IMR-90 (cell line): ENCODE measurements at regions of chr4 and their contacts with region 1.

Region 1: GRCh38 chr4:105471566-105472176 is 2.2 kb downstream of the PPA2 start:
- DNase-seq: peak; percentile 79
- ATAC-seq: peak; percentile 24
- H3K4me3 ChIP-seq: no peak overlapping the region
- H3K27ac ChIP-seq: no peak overlapping the region
- H3K4me1 ChIP-seq: peaks cover 3% of the 10 kb centered on the region; the same call in 1 of the 2 replicates
- H3K27me3 ChIP-seq: no peaks in the 10 kb centered on the region
- CTCF ChIP-seq: peak; percentile 80
- POLR2A ChIP-seq: no peak
- RAD21 ChIP-seq: peak; percentile 89

Region 2: DNA sequence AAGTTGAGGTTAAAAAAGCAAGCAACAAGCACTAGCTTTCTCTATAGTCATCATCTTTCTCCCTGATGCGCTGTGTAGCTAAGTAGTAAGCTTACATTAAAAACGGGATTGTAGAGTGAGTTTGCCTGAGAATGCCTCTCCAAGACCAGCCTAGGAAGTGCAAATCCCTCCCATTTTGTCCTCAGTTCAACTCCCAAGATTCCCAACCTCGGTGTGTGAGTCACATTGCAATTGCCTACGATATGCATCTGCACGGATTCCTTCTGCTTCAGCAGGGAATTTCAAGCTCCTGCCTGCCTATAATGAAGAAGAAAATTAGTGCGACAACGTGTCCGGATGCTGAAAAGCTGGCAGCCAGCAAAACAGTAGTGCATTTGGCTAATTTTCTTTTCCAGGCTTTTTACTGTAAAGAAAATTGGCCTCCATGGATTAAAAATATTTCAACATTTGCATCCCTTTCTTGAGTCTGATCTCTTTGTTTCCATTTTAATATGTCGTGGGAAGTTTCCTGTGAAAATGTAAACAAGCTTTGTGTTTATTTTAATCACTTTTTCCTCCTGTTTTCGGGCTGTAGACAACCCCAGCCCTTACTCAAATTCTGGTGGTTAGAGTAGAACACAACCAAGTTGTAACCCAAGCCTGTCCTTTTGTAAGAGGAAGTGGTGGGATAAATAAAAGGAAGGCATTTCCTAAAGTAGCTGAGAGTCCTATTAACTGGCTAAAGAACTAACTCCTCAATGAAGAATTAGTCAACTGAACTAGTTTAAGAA is 383.4 kb before region 1 on chr4:
- CTCF ChIA-PET with region 1: interaction called, 3 read pairs
- POLR2A ChIA-PET with region 1: interaction called, 4 read pairs
- dilution Hi-C with region 1: no loop called
- in situ Hi-C with region 1: no loop called
- intact Hi-C with region 1: loop called (anchors 1 kb)
- DNase-seq: peak; percentile 98
- ATAC-seq: peak; percentile 94
- H3K4me3 ChIP-seq: peak overlapping the region; percentile 24
- H3K27ac ChIP-seq: peak overlapping the region; percentile 64; the same call in 1 of the 2 replicates
- H3K4me1 ChIP-seq: peaks cover 5% of the 10 kb centered on the region; the same call in 1 of the 2 replicates
- H3K27me3 ChIP-seq: no peaks in the 10 kb centered on the region
- CTCF ChIP-seq: no peak
- POLR2A ChIP-seq: peak; percentile 71
- RAD21 ChIP-seq: no peak

Region 3: GRCh38 chr4:105106426-105106825 is 365.2 kb before region 1 on chr4:
- CTCF ChIA-PET with region 1: no interaction called
- POLR2A ChIA-PET with region 1: no interaction called
- dilution Hi-C with region 1: no loop called
- in situ Hi-C with region 1: no loop called
- intact Hi-C with region 1: no loop called
- DNase-seq: no peak
- ATAC-seq: no peak
- H3K4me3 ChIP-seq: no peak overlapping the region
- H3K27ac ChIP-seq: no peak overlapping the region
- H3K4me1 ChIP-seq: no peaks in the 10 kb centered on the region
- H3K27me3 ChIP-seq: no peaks in the 10 kb centered on the region; the same call in 1 of the 2 replicates
- CTCF ChIP-seq: no peak
- POLR2A ChIP-seq: no peak
- RAD21 ChIP-seq: no peak

Region 4: DNA sequence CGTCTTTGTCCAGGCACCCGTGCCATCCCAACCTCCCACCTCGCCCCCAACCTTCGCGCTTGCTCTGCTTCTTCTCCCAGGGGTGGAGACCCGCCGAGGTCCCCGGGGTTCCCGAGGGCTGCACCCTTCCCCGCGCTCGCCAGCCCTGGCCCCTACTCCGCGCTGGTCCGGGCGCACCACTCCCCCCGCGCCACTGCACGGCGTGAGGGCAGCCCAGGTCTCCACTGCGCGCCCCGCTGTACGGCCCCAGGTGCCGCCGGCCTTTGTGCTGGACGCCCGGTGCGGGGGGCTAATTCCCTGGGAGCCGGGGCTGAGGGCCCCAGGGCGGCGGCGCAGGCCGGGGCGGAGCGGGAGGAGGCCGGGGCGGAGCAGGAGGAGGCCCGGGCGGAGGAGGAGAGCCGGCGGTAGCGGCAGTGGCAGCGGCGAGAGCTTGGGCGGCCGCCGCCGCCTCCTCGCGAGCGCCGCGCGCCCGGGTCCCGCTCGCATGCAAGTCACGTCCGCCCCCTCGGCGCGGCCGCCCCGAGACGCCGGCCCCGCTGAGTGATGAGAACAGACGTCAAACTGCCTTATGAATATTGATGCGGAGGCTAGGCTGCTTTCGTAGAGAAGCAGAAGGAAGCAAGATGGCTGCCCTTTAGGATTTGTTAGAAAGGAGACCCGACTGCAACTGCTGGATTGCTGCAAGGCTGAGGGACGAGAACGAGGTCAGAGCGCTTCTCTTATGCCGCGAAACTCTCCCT is 325.2 kb before region 1 on chr4 and contains the start of gene TET2:
- CTCF ChIA-PET with region 1: interaction called, 8 read pairs
- POLR2A ChIA-PET with region 1: no interaction called
- dilution Hi-C with region 1: no loop called
- in situ Hi-C with region 1: loop called (anchors 5 kb)
- intact Hi-C with region 1: loop called (anchors 1 kb)
- DNase-seq: peak; percentile 87
- ATAC-seq: peak; percentile 88
- H3K4me3 ChIP-seq: peak within 1 kb of the TSS; percentile 94
- H3K27ac ChIP-seq: peak within 1 kb of the TSS; percentile 95
- H3K4me1 ChIP-seq: 0 out of 2 replicates have a peak, but pooled peaks cover 2% of the 10 kb centered on the region
- H3K27me3 ChIP-seq: no peaks in the 10 kb centered on the region
- CTCF ChIP-seq: no peak
- POLR2A ChIP-seq: peak; percentile 82
- RAD21 ChIP-seq: no peak; the same call in 1 of the 2 replicates
- total RNA-seq, gene TET2: 22.8 and 25.3 TPM in 2 replicates

Region 5: GRCh38 chr4:105280338-105281123 is 191.1 kb before region 1 on chr4:
- CTCF ChIA-PET with region 1: no interaction called
- POLR2A ChIA-PET with region 1: no interaction called
- dilution Hi-C with region 1: no loop called
- in situ Hi-C with region 1: no loop called
- intact Hi-C with region 1: loop called (anchors 5 kb)
- DNase-seq: peak; percentile 97
- ATAC-seq: peak; percentile 95
- H3K4me3 ChIP-seq: no peak overlapping the region
- H3K27ac ChIP-seq: peak overlapping the region; percentile 59
- H3K4me1 ChIP-seq: peaks cover 8% of the 10 kb centered on the region
- H3K27me3 ChIP-seq: no peaks in the 10 kb centered on the region
- CTCF ChIP-seq: no peak
- POLR2A ChIP-seq: no peak
- RAD21 ChIP-seq: no peak

Region 6: DNA sequence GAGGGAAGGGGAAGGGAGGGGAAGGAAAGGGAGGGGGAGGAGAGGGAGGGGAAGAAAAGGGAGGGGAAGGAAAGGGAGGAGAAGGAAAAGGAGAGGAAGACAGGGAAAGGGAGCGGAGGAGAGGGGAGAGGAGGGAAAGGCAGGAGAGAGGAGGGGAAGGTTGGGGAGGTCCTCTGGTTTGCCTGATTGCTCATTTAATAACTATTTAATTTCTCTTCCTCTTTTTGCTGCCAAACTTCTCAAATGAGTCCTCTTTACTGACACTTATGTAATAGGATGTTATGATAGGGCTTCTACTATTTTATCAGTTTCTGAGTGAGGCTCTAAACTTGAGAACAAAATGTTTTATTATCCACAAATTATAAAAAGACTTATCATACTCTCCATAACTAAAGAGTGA is 37.6 kb after region 1 on chr4:
- CTCF ChIA-PET with region 1: no interaction called
- POLR2A ChIA-PET with region 1: no interaction called
- dilution Hi-C with region 1: no loop called
- in situ Hi-C with region 1: no loop called
- intact Hi-C with region 1: no loop called
- DNase-seq: no peak
- ATAC-seq: no peak
- H3K4me3 ChIP-seq: no peak overlapping the region
- H3K27ac ChIP-seq: no peak overlapping the region
- H3K4me1 ChIP-seq: no peaks in the 10 kb centered on the region
- H3K27me3 ChIP-seq: no peaks in the 10 kb centered on the region
- CTCF ChIP-seq: no peak
- POLR2A ChIP-seq: no peak
- RAD21 ChIP-seq: no peak

Region 7: GRCh38 chr4:106080376-106080775 is 608.7 kb after region 1 on chr4:
- CTCF ChIA-PET with region 1: no interaction called
- POLR2A ChIA-PET with region 1: no interaction called
- dilution Hi-C with region 1: no loop called
- in situ Hi-C with region 1: no loop called
- intact Hi-C with region 1: no loop called
- DNase-seq: peak; percentile 7
- ATAC-seq: no peak
- H3K4me3 ChIP-seq: no peak overlapping the region
- H3K27ac ChIP-seq: no peak overlapping the region
- H3K4me1 ChIP-seq: no peaks in the 10 kb centered on the region
- H3K27me3 ChIP-seq: no peaks in the 10 kb centered on the region
- CTCF ChIP-seq: no peak
- POLR2A ChIP-seq: no peak
- RAD21 ChIP-seq: no peak